ENCODE measurements at regions of chr13 and their contacts with region 1.

Region 1: GRCh38 chr13:110017379-110017778 is 231.0 kb upstream of the IRS2 start:
- DNase-seq: no peak
- ATAC-seq: no peak
- H3K4me3 ChIP-seq: no peak overlapping the region
- H3K27ac ChIP-seq: no peak overlapping the region
- H3K4me1 ChIP-seq: no peaks in the 10 kb centered on the region
- H3K27me3 ChIP-seq: no peaks in the 10 kb centered on the region
- CTCF ChIP-seq: no peak
- EP300 ChIP-seq: no peak
- POLR2A ChIP-seq: no peak
- RAD21 ChIP-seq: no peak

Region 2: DNA sequence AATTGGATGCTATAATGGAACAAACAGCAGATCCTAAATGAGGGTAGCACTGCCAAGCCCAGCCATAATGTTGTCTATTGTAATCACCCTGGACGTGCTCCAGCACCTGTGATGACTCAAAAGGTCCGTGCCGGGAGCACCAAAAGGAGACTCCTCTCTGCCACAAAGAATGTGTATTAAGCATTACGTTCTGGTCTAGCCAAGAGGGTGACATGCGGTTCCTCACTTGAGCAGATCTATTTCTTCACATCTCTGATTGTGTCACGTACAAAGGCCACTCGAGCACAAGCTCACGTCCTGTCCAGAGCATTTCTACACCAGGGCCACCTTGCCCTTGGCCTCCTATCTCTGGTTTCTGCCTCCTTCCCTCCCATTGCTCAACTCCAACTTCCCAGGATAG is 11.1 kb before region 1 on chr13:
- CTCF ChIA-PET with region 1: no interaction called
- POLR2A ChIA-PET with region 1: no interaction called
- RAD21 ChIA-PET with region 1: no interaction called
- SMC1A ChIA-PET with region 1: no interaction called
- in situ Hi-C with region 1: no loop called
- intact Hi-C with region 1: no loop called
- DNase-seq: no peak
- ATAC-seq: no peak
- H3K4me3 ChIP-seq: no peak overlapping the region
- H3K27ac ChIP-seq: no peak overlapping the region
- H3K4me1 ChIP-seq: no peaks in the 10 kb centered on the region
- H3K27me3 ChIP-seq: no peaks in the 10 kb centered on the region
- CTCF ChIP-seq: no peak
- EP300 ChIP-seq: no peak
- POLR2A ChIP-seq: no peak
- RAD21 ChIP-seq: no peak

Region 3: GRCh38 chr13:110067355-110068175 is 50.2 kb after region 1 on chr13:
- CTCF ChIA-PET with region 1: no interaction called
- POLR2A ChIA-PET with region 1: no interaction called
- RAD21 ChIA-PET with region 1: no interaction called
- SMC1A ChIA-PET with region 1: no interaction called
- in situ Hi-C with region 1: loop called (anchors 5 kb)
- intact Hi-C with region 1: no loop called
- DNase-seq: no peak
- ATAC-seq: no peak
- H3K4me3 ChIP-seq: no peak overlapping the region
- H3K27ac ChIP-seq: no peak overlapping the region
- H3K4me1 ChIP-seq: no peaks in the 10 kb centered on the region
- H3K27me3 ChIP-seq: no peaks in the 10 kb centered on the region; a peak in 1 of 4 replicates
- CTCF ChIP-seq: no peak
- EP300 ChIP-seq: no peak
- POLR2A ChIP-seq: no peak
- RAD21 ChIP-seq: no peak